Natural killer cell (primary cell): ENCODE measurements at regions of chr19 and their contacts with region 1.

Region 1: DNA sequence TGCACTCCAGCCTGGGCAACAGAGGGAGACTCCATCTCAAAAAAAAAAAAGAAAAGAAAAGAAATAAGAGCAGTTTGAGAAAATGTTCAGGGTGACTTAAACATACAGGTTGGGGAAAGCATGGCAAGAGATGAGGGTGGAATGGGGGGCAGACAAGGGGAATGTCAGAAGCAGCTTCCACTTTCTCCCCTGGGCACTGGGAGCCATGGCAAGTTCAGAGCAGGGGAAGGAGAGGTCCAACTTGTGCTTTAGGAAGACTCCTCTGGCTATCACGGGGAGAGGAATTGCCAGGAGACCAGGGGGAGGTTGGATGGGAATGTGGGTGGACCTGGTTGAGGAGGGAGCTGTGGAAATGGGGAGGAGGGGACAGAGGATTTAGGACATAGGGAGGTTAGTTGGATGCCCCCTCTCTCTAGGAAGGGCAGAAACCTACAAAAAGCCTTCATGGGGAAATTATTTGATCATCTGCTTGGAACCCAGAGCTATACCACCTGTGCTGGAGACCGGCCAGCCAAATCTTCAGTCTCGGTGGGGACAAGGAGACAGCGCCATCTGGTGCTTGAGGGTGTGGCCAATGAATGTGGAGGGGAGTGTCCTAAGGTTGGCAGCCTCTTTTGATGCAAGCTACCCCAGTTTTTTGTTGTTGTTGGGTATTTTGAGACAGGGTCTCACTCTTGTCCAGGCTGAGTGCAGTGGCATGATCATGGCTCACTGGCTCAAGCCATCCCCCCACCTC is 7.3 kb upstream of the STRN4 start:
- DNase-seq: peak; percentile 54 to 85
- ATAC-seq: peak; percentile 77 to 89 (median 78)
- H3K4me3 ChIP-seq: no peak overlapping the region
- H3K4me3 Mint-ChIP-seq: no peak overlapping the region
- H3K27ac ChIP-seq: no peak overlapping the region
- H3K27ac Mint-ChIP-seq: no peak overlapping the region
- H3K4me1 ChIP-seq: peaks cover 15% of the 10 kb centered on the region
- H3K4me1 Mint-ChIP-seq: peaks cover 3 to 14% of the 10 kb centered on the region in 2 donors
- H3K27me3 ChIP-seq: no peaks in the 10 kb centered on the region
- H3K27me3 Mint-ChIP-seq: no peaks in the 10 kb centered on the region
- CTCF ChIP-seq: peak; percentile 58

Region 2: GRCh38 chr19:46692918-46693722 is 60.5 kb before region 1 on chr19:
- intact Hi-C with region 1: no loop called
- DNase-seq: no peak
- ATAC-seq: no peak
- H3K4me3 ChIP-seq: no peak overlapping the region
- H3K4me3 Mint-ChIP-seq: no peak overlapping the region
- H3K27ac ChIP-seq: no peak overlapping the region
- H3K27ac Mint-ChIP-seq: peak overlapping the region in 1 of 2 donors; percentile 52
- H3K4me1 ChIP-seq: no peaks in the 10 kb centered on the region
- H3K4me1 Mint-ChIP-seq: peaks cover 0 to 5% of the 10 kb centered on the region in 2 donors
- H3K27me3 ChIP-seq: no peaks in the 10 kb centered on the region
- H3K27me3 Mint-ChIP-seq: no peaks in the 10 kb centered on the region
- CTCF ChIP-seq: no peak

Region 3: GRCh38 chr19:46840136-46840942 is 86.8 kb after region 1 on chr19:
- intact Hi-C with region 1: loop called (anchors 1 kb)
- DNase-seq: peak in 1 of 2 donors; percentile 87
- ATAC-seq: peak; percentile 81 to 99 (median 95)
- H3K4me3 ChIP-seq: no peak overlapping the region
- H3K4me3 Mint-ChIP-seq: no peak overlapping the region
- H3K27ac ChIP-seq: no peak overlapping the region
- H3K27ac Mint-ChIP-seq: no peak overlapping the region
- H3K4me1 ChIP-seq: peaks cover 6% of the 10 kb centered on the region
- H3K4me1 Mint-ChIP-seq: peaks cover 0 to 7% of the 10 kb centered on the region in 2 donors
- H3K27me3 ChIP-seq: no peaks in the 10 kb centered on the region
- H3K27me3 Mint-ChIP-seq: no peaks in the 10 kb centered on the region
- CTCF ChIP-seq: peak; percentile 75